ENCODE measurements at regions of chr6 and their contacts with region 1.

Region 1: DNA sequence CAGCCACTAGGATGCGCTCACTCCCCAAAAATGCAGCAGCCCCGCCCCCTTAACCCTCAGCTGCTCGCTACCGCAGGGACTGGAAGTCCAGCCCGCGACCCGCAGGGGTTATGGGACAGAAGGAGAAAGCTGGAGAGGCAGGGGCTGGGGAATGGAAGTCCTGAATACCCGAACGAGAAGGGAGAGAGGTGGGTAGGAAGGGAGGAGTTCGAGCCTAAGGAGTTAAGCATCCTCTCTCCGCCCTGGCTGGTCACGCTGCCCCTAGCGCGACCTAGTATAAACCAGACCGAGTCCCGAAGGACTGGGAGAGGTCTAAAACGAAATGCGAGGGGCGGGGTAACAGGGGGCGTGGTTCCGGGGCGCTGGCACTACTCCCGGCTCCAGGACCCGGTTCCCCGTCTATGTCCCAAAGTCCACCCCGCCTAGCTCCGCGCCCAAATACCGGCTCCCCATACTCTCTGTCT is 448 bp upstream of the DDAH2 start:
- DNase-seq: peak; percentile 91 to 97 (median 94)
- ATAC-seq: peak; percentile 84
- H3K4me3 ChIP-seq: peak overlapping the region; percentile 65
- H3K27ac ChIP-seq: peak overlapping the region; percentile 75
- H3K4me1 ChIP-seq: peaks cover 53 to 67% of the 10 kb centered on the region in 2 experiments
- H3K27me3 ChIP-seq: no peaks in the 10 kb centered on the region
- CTCF ChIP-seq: peak; percentile 12 to 99 (median 95); a peak in 5 of 6 replicates
- EP300 ChIP-seq: no peak; the same call in 1 of the 2 replicates
- POLR2A ChIP-seq: no peak; the same call in 1 of the 2 replicates
- RAD21 ChIP-seq: peak; percentile 99

Region 2: DNA sequence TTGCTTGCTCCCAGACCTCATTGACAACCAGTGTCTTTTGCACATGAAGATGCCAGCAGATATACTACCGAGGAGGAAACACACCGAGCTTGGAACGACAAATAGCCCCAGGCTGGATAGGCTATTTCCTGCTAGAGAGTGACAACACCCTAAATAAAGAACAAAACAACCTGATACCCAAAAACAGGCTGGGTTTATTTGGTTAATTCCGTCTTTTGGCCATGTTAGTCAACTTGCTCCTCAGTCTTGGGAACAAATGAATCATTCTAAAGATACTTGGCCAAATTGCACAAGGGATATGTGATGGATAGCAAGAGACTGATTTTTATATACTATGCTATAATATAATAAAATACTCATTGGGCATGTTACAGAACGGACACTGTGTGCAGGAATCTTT is 730.8 kb before region 1 on chr6:
- CTCF ChIA-PET with region 1: no interaction called
- POLR2A ChIA-PET with region 1: no interaction called
- in situ Hi-C with region 1: no loop called
- intact Hi-C with region 1: no loop called
- DNase-seq: no peak
- ATAC-seq: no peak
- H3K4me3 ChIP-seq: no peak overlapping the region
- H3K27ac ChIP-seq: no peak overlapping the region
- H3K4me1 ChIP-seq: peaks cover 0 to 3% of the 10 kb centered on the region in 2 experiments; a peak in 2 of 5 replicates
- H3K27me3 ChIP-seq: peaks cover 14 to 18% of the 10 kb centered on the region in 2 experiments; a peak in 4 of 5 replicates
- CTCF ChIP-seq: no peak
- EP300 ChIP-seq: no peak
- POLR2A ChIP-seq: no peak
- RAD21 ChIP-seq: no peak

Region 3: GRCh38 chr6:31680840-31681671 is 48.5 kb before region 1 on chr6 and contains the start of gene LY6G5C:
- CTCF ChIA-PET with region 1: interaction called, 4 read pairs
- POLR2A ChIA-PET with region 1: interaction called, 5 read pairs
- in situ Hi-C with region 1: no loop called
- intact Hi-C with region 1: loop called (anchors 1 kb)
- DNase-seq: peak; percentile 82 to 94 (median 88)
- ATAC-seq: peak; percentile 88
- H3K4me3 ChIP-seq: no peak within 1 kb of the TSS
- H3K27ac ChIP-seq: no peak within 1 kb of the TSS
- H3K4me1 ChIP-seq: peaks cover 10 to 24% of the 10 kb centered on the region in 2 experiments
- H3K27me3 ChIP-seq: no peaks in the 10 kb centered on the region
- CTCF ChIP-seq: peak; percentile 96 to 99 (median 99)
- EP300 ChIP-seq: peak; percentile 39; the same call in 1 of the 2 replicates
- POLR2A ChIP-seq: no peak
- RAD21 ChIP-seq: peak; percentile 99 to 100
- polyA plus RNA-seq, gene LY6G5C: 0.10 TPM in 1 of 2 experiments, not detected in the other

Region 4: GRCh38 chr6:31702819-31703522 is 26.6 kb before region 1 on chr6 and contains the start of gene ABHD16A:
- CTCF ChIA-PET with region 1: no interaction called
- POLR2A ChIA-PET with region 1: interaction called, 223 read pairs
- in situ Hi-C with region 1: no loop called
- intact Hi-C with region 1: no loop called
- DNase-seq: peak; percentile 100
- ATAC-seq: peak; percentile 95
- H3K4me3 ChIP-seq: peak within 1 kb of the TSS; percentile 68
- H3K27ac ChIP-seq: peak within 1 kb of the TSS; percentile 93
- H3K4me1 ChIP-seq: peaks cover 22 to 34% of the 10 kb centered on the region in 2 experiments
- H3K27me3 ChIP-seq: no peaks in the 10 kb centered on the region
- CTCF ChIP-seq: peak in 2 of 3 experiments; percentile 14 to 17; a peak in 1 of 6 replicates
- EP300 ChIP-seq: peak; percentile 73
- POLR2A ChIP-seq: peak; percentile 98
- RAD21 ChIP-seq: peak in 1 of 2 experiments; percentile 21; a peak in 1 of 4 replicates
- polyA plus RNA-seq, gene ABHD16A: 25.8 to 49.7 TPM

Region 5: GRCh38 chr6:31752739-31753319 is 23.3 kb after region 1 on chr6:
- CTCF ChIA-PET with region 1: no interaction called
- POLR2A ChIA-PET with region 1: interaction called, 14 read pairs
- in situ Hi-C with region 1: no loop called
- intact Hi-C with region 1: no loop called
- DNase-seq: no peak
- ATAC-seq: peak; percentile 8
- H3K4me3 ChIP-seq: no peak overlapping the region
- H3K27ac ChIP-seq: 0 out of 3 replicates have a peak overlapping the region, but pooled peaks have one; percentile 0
- H3K4me1 ChIP-seq: peaks cover 5 to 15% of the 10 kb centered on the region in 2 experiments
- H3K27me3 ChIP-seq: no peaks in the 10 kb centered on the region
- CTCF ChIP-seq: no peak
- EP300 ChIP-seq: no peak
- POLR2A ChIP-seq: no peak
- RAD21 ChIP-seq: no peak

Region 6: GRCh38 chr6:31776989-31777666 is 47.6 kb after region 1 on chr6 and contains the start of gene VWA7:
- CTCF ChIA-PET with region 1: interaction called, 5 read pairs
- POLR2A ChIA-PET with region 1: interaction called, 12 read pairs
- in situ Hi-C with region 1: no loop called
- intact Hi-C with region 1: no loop called
- DNase-seq: peak; percentile 98 to 99 (median 99)
- ATAC-seq: peak; percentile 91
- H3K4me3 ChIP-seq: peak within 1 kb of the TSS; percentile 10; the same call in 1 of the 2 replicates
- H3K27ac ChIP-seq: peak within 1 kb of the TSS; percentile 87
- H3K4me1 ChIP-seq: peaks cover 43 to 85% of the 10 kb centered on the region in 2 experiments
- H3K27me3 ChIP-seq: no peaks in the 10 kb centered on the region
- CTCF ChIP-seq: peak; percentile 14 to 44 (median 24); a peak in 2 of 6 replicates
- EP300 ChIP-seq: peak; percentile 88
- POLR2A ChIP-seq: peak; percentile 84; the same call in 1 of the 2 replicates
- RAD21 ChIP-seq: peak; percentile 46 to 80
- polyA plus RNA-seq, gene VWA7: 0.18 to 0.32 TPM

Region 7: GRCh38 chr6:32188381-32189004 is 458.9 kb after region 1 on chr6:
- CTCF ChIA-PET with region 1: no interaction called
- POLR2A ChIA-PET with region 1: no interaction called
- in situ Hi-C with region 1: no loop called
- intact Hi-C with region 1: no loop called
- DNase-seq: peak in 1 of 4 experiments; percentile 41
- ATAC-seq: peak; percentile 9
- H3K4me3 ChIP-seq: peak overlapping the region; percentile 79
- H3K27ac ChIP-seq: peak overlapping the region; percentile 93
- H3K4me1 ChIP-seq: peaks cover 66 to 74% of the 10 kb centered on the region in 2 experiments
- H3K27me3 ChIP-seq: no peaks in the 10 kb centered on the region
- CTCF ChIP-seq: no peak
- EP300 ChIP-seq: no peak
- POLR2A ChIP-seq: no peak
- RAD21 ChIP-seq: no peak; a peak in 1 of 4 replicates

Region 8: DNA sequence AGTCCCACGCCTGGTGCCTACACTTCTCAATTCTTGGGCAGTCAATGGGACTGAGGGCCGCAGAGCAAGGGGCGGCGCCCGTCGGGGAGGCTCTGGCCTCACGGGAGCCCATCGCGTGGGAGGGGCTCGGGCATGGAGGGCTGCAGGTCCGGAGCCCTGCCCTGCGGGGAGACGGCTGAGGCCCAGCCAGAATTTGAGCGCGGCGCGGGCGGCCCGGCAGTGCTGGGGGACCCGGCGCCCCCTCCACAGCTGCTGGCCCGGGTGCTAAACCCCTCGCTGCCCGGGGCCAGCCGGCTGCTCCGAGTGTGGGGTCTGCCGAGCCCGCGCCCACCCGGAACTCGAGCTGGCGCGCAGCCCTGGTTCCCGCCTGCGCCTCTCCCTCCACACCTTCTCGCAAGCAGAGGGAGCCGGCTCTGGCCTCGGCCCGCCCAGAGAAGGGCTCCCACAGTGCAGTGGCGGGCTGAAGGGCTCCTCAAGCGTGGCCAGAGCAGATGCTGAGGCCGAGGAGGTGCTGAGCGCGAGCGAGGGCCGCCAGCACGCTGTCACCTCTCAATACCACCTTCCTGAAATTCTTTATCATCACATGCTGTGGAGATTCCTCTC is 1792.0 kb after region 1 on chr6:
- CTCF ChIA-PET with region 1: no interaction called
- POLR2A ChIA-PET with region 1: no interaction called
- in situ Hi-C with region 1: no loop called
- intact Hi-C with region 1: no loop called
- DNase-seq: no peak
- ATAC-seq: peak; percentile 40; the same call in 2 of the 3 replicates
- H3K4me3 ChIP-seq: no peak overlapping the region
- H3K27ac ChIP-seq: no peak overlapping the region
- H3K4me1 ChIP-seq: peaks cover 0 to 8% of the 10 kb centered on the region in 2 experiments; a peak in 1 of 5 replicates
- H3K27me3 ChIP-seq: peaks cover 52 to 64% of the 10 kb centered on the region in 2 experiments
- CTCF ChIP-seq: no peak
- EP300 ChIP-seq: no peak
- POLR2A ChIP-seq: no peak
- RAD21 ChIP-seq: no peak

Measured in K562 (cell line).